HepG2 (cell line): ENCODE measurements at regions of chr2 and their contacts with region 1.

Region 1: GRCh38 chr2:241546771-241547498 is 11.6 kb upstream of the BOK start:
- DNase-seq: peak; percentile 90
- ATAC-seq: peak; percentile 17
- H3K4me3 ChIP-seq: peak overlapping the region; percentile 1 to 58 (median 9); a peak in 3 of 6 replicates
- H3K27ac ChIP-seq: peak overlapping the region; percentile 58
- H3K4me1 ChIP-seq: peaks cover 63% of the 10 kb centered on the region
- H3K27me3 ChIP-seq: no peaks in the 10 kb centered on the region
- CTCF ChIP-seq: no peak
- EP300 ChIP-seq: no peak; a peak in 1 of 4 replicates
- POLR2A ChIP-seq: no peak
- RAD21 ChIP-seq: no peak

Region 2: GRCh38 chr2:241432824-241433448 is 114.0 kb before region 1 on chr2:
- CTCF ChIA-PET with region 1: no interaction called
- POLR2A ChIA-PET with region 1: no interaction called
- in situ Hi-C with region 1: no loop called
- intact Hi-C with region 1: no loop called
- DNase-seq: peak; percentile 94
- ATAC-seq: peak; percentile 95
- H3K4me3 ChIP-seq: no peak overlapping the region; a peak in 1 of 6 replicates
- H3K27ac ChIP-seq: peak overlapping the region; percentile 66
- H3K4me1 ChIP-seq: peaks cover 28% of the 10 kb centered on the region
- H3K27me3 ChIP-seq: no peaks in the 10 kb centered on the region
- CTCF ChIP-seq: no peak
- EP300 ChIP-seq: peak in 1 of 2 experiments; percentile 96; a peak in 2 of 4 replicates
- POLR2A ChIP-seq: no peak
- RAD21 ChIP-seq: no peak

Region 3: GRCh38 chr2:241508240-241509154 is 38.4 kb before region 1 on chr2 and contains the start of gene STK25:
- CTCF ChIA-PET with region 1: no interaction called
- POLR2A ChIA-PET with region 1: interaction called, 3 read pairs
- in situ Hi-C with region 1: no loop called
- intact Hi-C with region 1: loop called (anchors 1 kb)
- DNase-seq: peak; percentile 97
- ATAC-seq: peak; percentile 91
- H3K4me3 ChIP-seq: peak within 1 kb of the TSS; percentile 85 to 98 (median 89)
- H3K27ac ChIP-seq: peak within 1 kb of the TSS; percentile 70
- H3K4me1 ChIP-seq: peaks cover 62% of the 10 kb centered on the region
- H3K27me3 ChIP-seq: no peaks in the 10 kb centered on the region
- CTCF ChIP-seq: no peak; the same call in 1 of the 2 replicates
- EP300 ChIP-seq: peak in 1 of 2 experiments; percentile 35; a peak in 1 of 4 replicates
- POLR2A ChIP-seq: peak in 1 of 2 experiments; percentile 57; a peak in 2 of 4 replicates
- RAD21 ChIP-seq: no peak; the same call in 1 of the 2 replicates
- total RNA-seq, gene STK25: 123 and 177 TPM in 2 replicates

Region 4: DNA sequence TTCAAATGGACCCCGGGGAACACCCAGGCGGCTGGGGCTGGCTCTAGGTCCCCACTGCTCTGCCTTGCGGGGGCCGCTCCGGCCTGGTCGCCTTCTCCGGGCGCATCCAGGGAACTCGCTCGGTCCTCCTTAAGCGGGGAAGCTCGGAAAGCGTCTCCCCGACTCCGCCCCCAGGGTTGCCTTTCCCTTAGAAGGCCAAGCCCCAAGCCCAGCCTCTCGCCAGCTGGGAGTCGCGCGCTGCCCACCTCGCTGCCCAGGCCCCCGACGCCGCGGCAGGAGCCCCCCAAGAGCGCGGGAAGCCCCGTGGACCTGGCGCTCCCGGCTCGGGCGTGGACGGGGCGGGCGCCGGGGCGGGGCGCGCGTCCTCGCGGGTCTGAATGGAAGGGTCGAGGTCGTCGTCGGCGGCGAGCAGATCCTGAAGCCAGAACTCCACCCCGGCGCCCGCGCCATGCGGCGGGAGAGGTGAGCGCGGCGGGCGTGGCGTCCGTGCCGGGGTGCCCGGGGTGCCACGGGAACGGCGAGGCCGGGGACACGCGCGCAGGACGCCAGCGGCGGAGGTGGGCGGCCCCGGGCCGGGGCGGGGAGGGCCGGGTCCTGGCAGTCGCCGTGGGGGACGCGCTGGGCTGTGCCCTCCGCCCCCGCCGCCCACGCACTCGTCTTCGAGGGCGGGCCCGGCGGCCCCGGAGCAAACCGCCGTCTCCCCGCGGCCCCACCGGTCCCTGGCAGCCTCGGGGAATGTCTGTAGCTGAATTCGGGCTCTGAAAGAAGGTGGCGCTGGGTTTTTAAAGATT is 11.8 kb after region 1 on chr2 and contains the start of gene BOK:
- CTCF ChIA-PET with region 1: no interaction called
- POLR2A ChIA-PET with region 1: interaction called, 14 read pairs
- in situ Hi-C with region 1: no loop called
- intact Hi-C with region 1: no loop called
- DNase-seq: peak; percentile 73
- ATAC-seq: peak; percentile 60
- H3K4me3 ChIP-seq: peak within 1 kb of the TSS; percentile 85 to 93 (median 86)
- H3K27ac ChIP-seq: peak within 1 kb of the TSS; percentile 53
- H3K4me1 ChIP-seq: peaks cover 63% of the 10 kb centered on the region
- H3K27me3 ChIP-seq: no peaks in the 10 kb centered on the region; a peak in 1 of 5 replicates
- CTCF ChIP-seq: no peak; the same call in 1 of the 2 replicates
- EP300 ChIP-seq: no peak
- POLR2A ChIP-seq: no peak; a peak in 1 of 4 replicates
- RAD21 ChIP-seq: peak; percentile 5
- total RNA-seq, gene BOK: 30.2 and 35.5 TPM in 2 replicates

Region 5: DNA sequence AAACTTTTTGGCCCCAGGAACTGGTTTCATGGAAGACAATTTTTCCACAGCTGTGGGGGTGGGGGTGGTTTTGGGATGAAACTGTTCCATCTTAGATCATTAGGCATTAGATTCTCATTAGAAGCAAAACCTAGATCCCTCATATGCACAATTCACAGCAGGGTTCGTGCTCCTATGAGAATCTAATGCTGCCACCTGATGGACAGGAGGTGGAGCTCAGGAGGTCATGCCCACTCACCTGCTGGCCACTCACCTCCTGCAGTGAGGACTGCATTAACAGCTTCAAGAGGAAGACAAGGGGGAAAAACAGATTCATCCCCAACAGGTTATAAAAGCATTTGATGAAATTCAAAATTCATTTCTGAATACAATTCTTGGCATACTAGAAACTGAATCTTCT is 51.5 kb after region 1 on chr2:
- CTCF ChIA-PET with region 1: no interaction called
- POLR2A ChIA-PET with region 1: no interaction called
- in situ Hi-C with region 1: no loop called
- intact Hi-C with region 1: loop called (anchors 5 kb)
- DNase-seq: peak; percentile 45
- ATAC-seq: peak; percentile 72
- H3K4me3 ChIP-seq: no peak overlapping the region
- H3K27ac ChIP-seq: no peak overlapping the region
- H3K4me1 ChIP-seq: no peaks in the 10 kb centered on the region
- H3K27me3 ChIP-seq: no peaks in the 10 kb centered on the region
- CTCF ChIP-seq: peak; percentile 80
- EP300 ChIP-seq: no peak
- POLR2A ChIP-seq: no peak
- RAD21 ChIP-seq: no peak

Region 6: GRCh38 chr2:241609859-241610793 is 63.2 kb after region 1 on chr2:
- CTCF ChIA-PET with region 1: no interaction called
- POLR2A ChIA-PET with region 1: interaction called, 3 read pairs
- in situ Hi-C with region 1: no loop called
- intact Hi-C with region 1: loop called (anchors 1 kb)
- DNase-seq: peak; percentile 93
- ATAC-seq: peak; percentile 99
- H3K4me3 ChIP-seq: peak overlapping the region; percentile 75 to 89 (median 78)
- H3K27ac ChIP-seq: peak overlapping the region; percentile 86
- H3K4me1 ChIP-seq: peaks cover 32% of the 10 kb centered on the region
- H3K27me3 ChIP-seq: no peaks in the 10 kb centered on the region
- CTCF ChIP-seq: peak; percentile 90
- EP300 ChIP-seq: 0 out of 4 replicates have a peak, but pooled peaks of 1 of the 2 experiments have one; percentile 34
- POLR2A ChIP-seq: peak; percentile 77 to 95
- RAD21 ChIP-seq: peak; percentile 95

Region 7: GRCh38 chr2:241649404-241649803 is 102.5 kb after region 1 on chr2:
- CTCF ChIA-PET with region 1: no interaction called
- POLR2A ChIA-PET with region 1: no interaction called
- in situ Hi-C with region 1: no loop called
- intact Hi-C with region 1: loop called (anchors 5 kb)
- DNase-seq: no peak
- ATAC-seq: no peak
- H3K4me3 ChIP-seq: no peak overlapping the region
- H3K27ac ChIP-seq: no peak overlapping the region
- H3K4me1 ChIP-seq: peaks cover 78% of the 10 kb centered on the region
- H3K27me3 ChIP-seq: no peaks in the 10 kb centered on the region
- CTCF ChIP-seq: no peak
- EP300 ChIP-seq: no peak
- POLR2A ChIP-seq: no peak
- RAD21 ChIP-seq: no peak

Region 8: GRCh38 chr2:241659150-241659739 is 112.3 kb after region 1 on chr2:
- CTCF ChIA-PET with region 1: interaction called, 7 read pairs
- POLR2A ChIA-PET with region 1: no interaction called
- in situ Hi-C with region 1: loop called (anchors 5 kb)
- intact Hi-C with region 1: no loop called
- DNase-seq: peak; percentile 78
- ATAC-seq: peak; percentile 74
- H3K4me3 ChIP-seq: no peak overlapping the region
- H3K27ac ChIP-seq: peak overlapping the region; percentile 18
- H3K4me1 ChIP-seq: no peaks in the 10 kb centered on the region
- H3K27me3 ChIP-seq: no peaks in the 10 kb centered on the region
- CTCF ChIP-seq: peak; percentile 93
- EP300 ChIP-seq: no peak
- POLR2A ChIP-seq: no peak
- RAD21 ChIP-seq: peak; percentile 93